ENCODE measurements at regions of chr5 and their contacts with region 1.

Region 1: DNA sequence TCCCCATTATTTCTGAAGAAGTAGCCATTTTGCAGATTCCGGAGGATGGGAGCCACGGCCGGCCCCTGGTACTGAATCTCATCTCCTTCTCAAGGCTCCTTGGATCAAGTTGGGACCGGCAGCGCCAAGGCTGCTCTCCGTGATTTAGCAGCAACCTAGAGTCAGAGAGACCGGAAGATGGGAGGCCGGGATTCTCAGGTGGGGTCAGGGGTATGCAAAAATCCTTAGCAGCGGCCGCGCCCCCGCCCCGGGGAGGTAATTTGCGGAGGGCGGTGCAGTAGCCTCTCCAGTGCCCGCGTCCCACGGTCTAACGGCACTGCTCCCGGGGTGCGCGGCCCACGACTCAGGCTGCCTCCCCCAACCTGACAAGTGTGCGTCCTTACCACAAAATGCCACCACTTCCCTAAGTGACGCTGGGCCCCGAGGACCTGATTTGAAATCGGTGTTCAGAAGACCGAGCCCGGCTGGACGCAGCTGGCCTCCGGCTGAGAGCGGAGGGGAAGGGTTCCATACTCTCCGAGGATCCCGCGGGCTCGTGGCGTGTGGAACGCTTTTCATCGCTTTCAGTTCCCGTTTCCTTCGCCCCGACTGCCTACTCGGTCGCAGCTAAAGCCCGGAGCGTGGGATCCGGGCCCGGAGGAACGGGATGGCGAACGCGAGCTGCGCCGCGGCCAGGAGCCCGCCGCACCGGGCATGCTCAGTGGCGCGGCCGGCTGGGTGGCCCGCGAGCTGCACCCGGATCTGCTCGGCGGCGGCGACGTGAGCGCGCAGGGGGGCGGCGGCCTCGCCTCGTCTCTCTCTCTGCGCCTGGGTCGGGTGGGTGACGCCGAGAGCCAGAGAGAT is at the start of gene SCAMP1:
- DNase-seq: peak; percentile 95
- H3K4me3 ChIP-seq: peak within 1 kb of the TSS; percentile 72
- H3K27ac ChIP-seq: peak within 1 kb of the TSS; percentile 88
- H3K4me1 ChIP-seq: peaks cover 6% of the 10 kb centered on the region
- H3K27me3 ChIP-seq: no peaks in the 10 kb centered on the region
- CTCF ChIP-seq: peak; percentile 38
- total RNA-seq, gene SCAMP1: 26.4 to 53.5 TPM

Region 2: DNA sequence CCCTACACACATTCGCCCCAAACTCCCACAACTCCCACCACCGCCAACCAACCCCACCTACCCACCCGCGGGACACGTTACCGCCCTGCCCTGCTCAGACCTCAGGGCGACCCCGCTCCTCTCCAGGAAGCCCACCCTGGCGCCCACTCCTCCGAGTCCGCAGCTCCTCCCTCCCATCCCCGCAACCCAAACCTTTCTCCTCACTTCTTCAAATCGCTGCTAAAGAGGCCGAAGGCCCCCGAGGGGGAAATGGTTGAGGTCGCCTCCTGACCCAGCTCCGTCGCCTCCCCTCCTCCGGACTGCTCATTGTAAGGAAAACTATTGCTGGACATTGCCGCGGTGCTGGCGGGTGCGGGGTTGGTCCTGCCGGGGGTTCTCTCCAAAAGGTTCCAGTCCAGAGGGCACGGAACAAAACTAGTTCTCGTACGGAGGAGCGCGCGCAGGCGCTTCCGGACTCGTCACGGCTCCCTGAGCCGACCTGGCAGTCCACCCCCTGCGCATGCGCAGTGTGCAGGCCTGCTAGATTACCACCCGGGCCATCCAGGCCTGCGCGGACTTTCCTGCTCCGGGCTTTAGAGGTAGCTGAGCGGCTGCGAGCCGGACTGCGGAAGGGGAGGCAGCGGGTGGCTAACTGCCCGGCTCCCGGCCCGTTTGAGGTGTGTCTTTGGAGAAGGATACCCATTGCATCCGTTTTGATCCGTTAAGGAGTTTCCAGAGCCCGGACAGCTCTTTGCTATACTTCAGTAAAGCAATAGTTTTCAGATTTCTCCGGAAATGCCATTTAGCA is 65.6 kb before region 1 on chr5 and contains the start of gene AP3B1:
- intact Hi-C with region 1: loop called (anchors 2 kb)
- DNase-seq: peak; percentile 99
- H3K4me3 ChIP-seq: peak within 1 kb of the TSS; percentile 77
- H3K27ac ChIP-seq: peak within 1 kb of the TSS; percentile 82
- H3K4me1 ChIP-seq: peaks cover 3% of the 10 kb centered on the region
- H3K27me3 ChIP-seq: no peaks in the 10 kb centered on the region
- CTCF ChIP-seq: no peak
- total RNA-seq, gene AP3B1: 53.3 to 62.6 TPM